B cell (primary cell): ENCODE measurements at regions of chr14 and their contacts with region 1.

Region 1: GRCh38 chr14:99982537-99983250 is 82.5 kb upstream of the EVL start:
- DNase-seq: peak; percentile 74
- ATAC-seq: peak; percentile 99
- H3K4me3 ChIP-seq: no peak overlapping the region
- H3K4me3 Mint-ChIP-seq: no peak overlapping the region
- H3K27ac ChIP-seq: no peak overlapping the region
- H3K27ac Mint-ChIP-seq: no peak overlapping the region
- H3K4me1 ChIP-seq: no peaks in the 10 kb centered on the region
- H3K4me1 Mint-ChIP-seq: no peaks in the 10 kb centered on the region
- H3K27me3 ChIP-seq: no peaks in the 10 kb centered on the region
- H3K27me3 Mint-ChIP-seq: no peaks in the 10 kb centered on the region
- CTCF ChIP-seq: peak; percentile 96

Region 2: DNA sequence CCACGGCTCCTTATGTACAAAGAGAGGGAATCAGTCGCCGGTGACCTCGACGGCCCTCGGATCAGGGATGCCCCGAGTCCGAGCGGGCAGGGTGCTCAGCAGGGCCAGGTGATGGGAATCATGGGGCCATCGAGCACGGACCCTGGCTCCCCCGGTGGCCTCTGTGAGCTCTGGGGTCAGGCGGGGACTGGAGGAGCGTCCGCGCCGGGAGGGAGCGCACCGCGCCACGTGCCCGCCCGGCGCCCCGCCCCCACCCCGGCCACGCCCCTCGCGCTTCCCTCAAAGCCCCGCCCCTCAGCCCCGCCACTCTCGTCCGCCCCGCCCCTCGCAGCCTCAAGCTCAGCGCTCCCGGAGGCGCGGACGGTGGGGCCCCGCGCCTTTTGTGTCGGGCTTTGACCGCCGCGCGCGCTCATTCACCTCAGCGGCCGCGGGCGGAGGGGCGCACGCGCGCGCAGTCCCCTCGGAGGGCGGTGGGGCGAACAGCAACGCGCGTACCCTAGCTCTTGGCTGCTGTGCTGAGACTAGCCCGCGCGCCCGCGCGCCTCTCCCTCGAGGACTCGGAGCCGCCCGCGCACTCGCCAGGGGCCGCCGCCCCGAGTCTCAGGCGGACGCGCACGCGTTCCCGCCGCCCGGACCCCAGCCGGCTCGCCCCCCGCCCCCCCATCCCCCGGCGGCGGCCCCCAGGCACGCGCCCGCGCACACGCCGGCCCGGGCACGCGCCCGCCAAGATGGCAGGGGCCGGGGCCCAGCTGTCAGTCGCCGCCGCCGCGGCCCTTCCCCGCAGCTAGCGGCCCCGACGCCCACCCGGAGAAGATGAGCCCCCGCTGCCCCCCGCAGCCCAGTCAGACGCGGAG is 11.4 kb before region 1 on chr14:
- CTCF ChIA-PET with region 1: interaction called, 17 read pairs
- POLR2A ChIA-PET with region 1: no interaction called
- intact Hi-C with region 1: loop called (anchors 1 kb)
- DNase-seq: peak; percentile 82
- ATAC-seq: peak; percentile 86
- H3K4me3 ChIP-seq: peak overlapping the region in 4 of 5 experiments; percentile 31 to 64 (median 61)
- H3K4me3 Mint-ChIP-seq: peak overlapping the region; percentile 83
- H3K27ac ChIP-seq: no peak overlapping the region
- H3K27ac Mint-ChIP-seq: no peak overlapping the region
- H3K4me1 ChIP-seq: peaks cover 12 to 14% of the 10 kb centered on the region in 2 donors
- H3K4me1 Mint-ChIP-seq: peaks cover 9% of the 10 kb centered on the region
- H3K27me3 ChIP-seq: peaks cover 0 to 50% (median 8%) of the 10 kb centered on the region in 4 experiments
- H3K27me3 Mint-ChIP-seq: peaks cover 58% of the 10 kb centered on the region
- CTCF ChIP-seq: no peak

Region 3: DNA sequence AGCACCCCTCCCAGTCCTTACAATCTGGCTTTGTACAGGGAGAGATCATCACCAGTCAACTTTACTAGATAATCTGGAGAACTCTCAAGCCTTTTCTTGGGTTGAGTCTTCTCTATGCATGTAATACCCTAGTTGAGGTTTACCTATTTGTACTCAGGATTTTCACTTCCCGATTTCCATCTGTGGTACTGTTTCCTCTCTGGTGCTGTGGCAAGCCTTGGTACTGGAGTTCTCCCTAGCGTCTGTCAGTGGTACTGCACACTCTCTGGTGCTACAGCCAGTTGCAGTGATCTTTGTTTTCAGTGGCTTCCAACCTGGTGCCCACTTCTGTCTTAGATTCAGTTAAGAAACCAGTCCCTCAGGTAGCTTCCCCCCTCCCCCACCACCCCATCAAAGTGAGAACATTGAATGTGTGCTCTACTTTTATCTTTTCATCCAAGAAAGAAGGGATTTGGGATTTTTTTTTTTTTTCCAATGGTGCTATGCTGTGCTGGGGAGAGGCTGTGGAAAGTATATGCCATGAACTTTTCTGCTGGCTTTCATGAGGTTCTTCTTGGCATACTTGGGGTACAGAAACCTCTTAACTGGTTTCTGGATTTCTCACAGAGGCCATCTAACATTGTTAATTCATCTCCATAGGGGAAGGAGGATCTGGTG is 13.1 kb after region 1 on chr14:
- CTCF ChIA-PET with region 1: interaction called, 27 read pairs
- POLR2A ChIA-PET with region 1: no interaction called
- intact Hi-C with region 1: loop called (anchors 1 kb)
- DNase-seq: peak; percentile 87
- ATAC-seq: peak; percentile 100
- H3K4me3 ChIP-seq: no peak overlapping the region
- H3K4me3 Mint-ChIP-seq: no peak overlapping the region
- H3K27ac ChIP-seq: no peak overlapping the region
- H3K27ac Mint-ChIP-seq: no peak overlapping the region
- H3K4me1 ChIP-seq: peaks cover 8 to 9% of the 10 kb centered on the region in 2 donors
- H3K4me1 Mint-ChIP-seq: peaks cover 8% of the 10 kb centered on the region
- H3K27me3 ChIP-seq: no peaks in the 10 kb centered on the region
- H3K27me3 Mint-ChIP-seq: peaks cover 19% of the 10 kb centered on the region
- CTCF ChIP-seq: peak; percentile 89

Region 4: DNA sequence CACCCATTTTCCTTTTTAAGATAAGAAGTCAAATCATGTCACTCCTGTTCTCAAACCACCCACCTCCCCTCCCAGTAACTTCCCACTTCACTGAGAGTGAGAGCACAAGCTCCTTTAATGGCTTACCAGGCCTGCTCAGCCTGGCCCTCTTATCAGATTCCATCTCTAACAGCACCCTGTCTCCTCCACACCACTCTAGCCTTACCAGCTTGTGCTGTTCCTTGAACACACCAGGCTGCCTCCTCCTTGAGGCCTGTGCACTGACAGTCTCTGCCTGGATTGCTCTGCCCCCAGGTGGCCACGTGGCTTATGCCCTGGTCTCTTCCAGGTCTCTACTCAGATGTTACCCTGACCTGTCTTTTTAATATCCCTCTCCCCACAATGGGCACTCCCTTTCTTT is 42.4 kb after region 1 on chr14:
- CTCF ChIA-PET with region 1: interaction called, 4 read pairs
- POLR2A ChIA-PET with region 1: no interaction called
- intact Hi-C with region 1: loop called (anchors 1 kb)
- DNase-seq: no peak
- ATAC-seq: no peak
- H3K4me3 ChIP-seq: no peak overlapping the region
- H3K4me3 Mint-ChIP-seq: no peak overlapping the region
- H3K27ac ChIP-seq: no peak overlapping the region
- H3K27ac Mint-ChIP-seq: no peak overlapping the region
- H3K4me1 ChIP-seq: no peaks in the 10 kb centered on the region
- H3K4me1 Mint-ChIP-seq: no peaks in the 10 kb centered on the region
- H3K27me3 ChIP-seq: no peaks in the 10 kb centered on the region
- H3K27me3 Mint-ChIP-seq: peaks cover 15% of the 10 kb centered on the region
- CTCF ChIP-seq: no peak